Activated naive CD4-positive, alpha-beta T cell treated with anti-CD3 and anti-CD28 coated beads, Interleukin-2, amount 10 ng/mL, durations not matched to agents 7 days and 5 days (primary cell): ENCODE measurements at regions of chr6 and their contacts with region 1.

Region 1: GRCh38 chr6:89371849-89372505 is 19.5 kb upstream of the UBE2J1 start:
- DNase-seq: peak; percentile 85
- H3K4me3 Mint-ChIP-seq: no peak overlapping the region
- H3K27ac Mint-ChIP-seq: peak overlapping the region; percentile 84
- H3K4me1 Mint-ChIP-seq: peaks cover 45% of the 10 kb centered on the region
- H3K27me3 Mint-ChIP-seq: no peaks in the 10 kb centered on the region

Region 2: GRCh38 chr6:88982720-88983119 is 389.3 kb before region 1 on chr6:
- CTCF ChIA-PET with region 1: interaction called, 19 read pairs
- DNase-seq: no peak
- H3K4me3 Mint-ChIP-seq: no peak overlapping the region
- H3K27ac Mint-ChIP-seq: no peak overlapping the region
- H3K4me1 Mint-ChIP-seq: peaks cover 2% of the 10 kb centered on the region
- H3K27me3 Mint-ChIP-seq: peaks cover 4% of the 10 kb centered on the region

Region 3: GRCh38 chr6:89352278-89353117 is 19.5 kb before region 1 on chr6 and contains the start of gene UBE2J1:
- CTCF ChIA-PET with region 1: interaction called, 19 read pairs
- DNase-seq: peak; percentile 82
- H3K4me3 Mint-ChIP-seq: peak within 1 kb of the TSS; percentile 96
- H3K27ac Mint-ChIP-seq: peak within 1 kb of the TSS; percentile 93
- H3K4me1 Mint-ChIP-seq: peaks cover 72% of the 10 kb centered on the region
- H3K27me3 Mint-ChIP-seq: no peaks in the 10 kb centered on the region

Region 4: GRCh38 chr6:89412071-89413005 is 40.4 kb after region 1 on chr6 and contains the start of gene RRAGD:
- CTCF ChIA-PET with region 1: interaction called, 16 read pairs
- DNase-seq: peak; percentile 77
- H3K4me3 Mint-ChIP-seq: peak within 1 kb of the TSS; percentile 94
- H3K27ac Mint-ChIP-seq: peak within 1 kb of the TSS; percentile 33
- H3K4me1 Mint-ChIP-seq: peaks cover 24% of the 10 kb centered on the region
- H3K27me3 Mint-ChIP-seq: peaks cover 60% of the 10 kb centered on the region

Region 5: DNA sequence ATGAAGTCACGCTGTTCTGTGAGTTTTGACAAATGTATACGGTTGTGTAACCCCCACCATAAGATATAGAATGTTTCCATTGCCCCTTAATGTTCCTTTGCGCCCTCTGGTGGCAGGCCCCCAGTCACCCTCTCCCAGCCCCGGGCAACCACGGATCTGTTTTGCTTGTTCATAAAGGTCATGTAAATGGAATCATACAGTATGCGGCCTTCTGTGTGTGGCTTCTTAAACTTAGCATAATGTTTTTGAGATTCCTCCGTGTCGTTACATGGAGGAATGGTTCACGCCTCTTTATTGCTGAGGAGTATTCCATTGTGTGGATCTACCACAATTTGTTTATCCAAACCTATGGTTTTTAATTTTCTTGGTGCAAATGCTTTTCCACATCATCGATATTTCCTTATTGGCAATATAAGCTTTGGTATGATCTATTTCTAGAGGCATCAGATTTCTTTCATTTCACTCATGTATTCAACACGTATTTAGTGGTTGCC is 238.2 kb after region 1 on chr6:
- CTCF ChIA-PET with region 1: interaction called, 26 read pairs
- DNase-seq: peak; percentile 85
- H3K4me3 Mint-ChIP-seq: no peak overlapping the region
- H3K27ac Mint-ChIP-seq: peak overlapping the region; percentile 15
- H3K4me1 Mint-ChIP-seq: peaks cover 19% of the 10 kb centered on the region
- H3K27me3 Mint-ChIP-seq: no peaks in the 10 kb centered on the region